ENCODE measurements at regions of chr2 and their contacts with region 1.

Region 1: DNA sequence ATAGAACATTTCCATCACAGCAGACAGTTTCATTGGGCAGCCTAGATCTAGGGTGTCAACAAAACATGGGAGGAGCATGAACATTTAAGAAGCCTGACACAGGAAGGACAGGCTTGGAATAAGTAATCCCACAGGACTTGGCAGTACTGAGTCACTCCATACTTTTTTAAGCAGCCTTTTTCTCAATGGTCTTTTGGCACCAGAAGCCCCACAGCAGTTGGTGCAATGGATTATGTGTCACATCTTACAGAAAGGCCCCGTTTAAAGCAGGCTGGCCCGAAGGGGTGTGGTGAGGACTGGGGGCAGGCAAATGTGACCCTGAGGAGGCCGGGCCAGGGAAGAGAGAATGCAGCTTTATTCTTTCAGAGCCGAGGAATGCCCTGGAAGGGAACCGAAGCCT is 26.6 kb downstream of the SPTBN1 start:
- DNase-seq: no peak
- ATAC-seq: no peak
- H3K4me3 ChIP-seq: no peak overlapping the region
- H3K4me3 Mint-ChIP-seq: no peak overlapping the region
- H3K27ac ChIP-seq: no peak overlapping the region
- H3K27ac Mint-ChIP-seq: no peak overlapping the region
- H3K4me1 ChIP-seq: no peaks in the 10 kb centered on the region
- H3K4me1 Mint-ChIP-seq: no peaks in the 10 kb centered on the region
- H3K27me3 ChIP-seq: no peaks in the 10 kb centered on the region
- H3K27me3 Mint-ChIP-seq: no peaks in the 10 kb centered on the region
- CTCF ChIP-seq: no peak

Region 2: DNA sequence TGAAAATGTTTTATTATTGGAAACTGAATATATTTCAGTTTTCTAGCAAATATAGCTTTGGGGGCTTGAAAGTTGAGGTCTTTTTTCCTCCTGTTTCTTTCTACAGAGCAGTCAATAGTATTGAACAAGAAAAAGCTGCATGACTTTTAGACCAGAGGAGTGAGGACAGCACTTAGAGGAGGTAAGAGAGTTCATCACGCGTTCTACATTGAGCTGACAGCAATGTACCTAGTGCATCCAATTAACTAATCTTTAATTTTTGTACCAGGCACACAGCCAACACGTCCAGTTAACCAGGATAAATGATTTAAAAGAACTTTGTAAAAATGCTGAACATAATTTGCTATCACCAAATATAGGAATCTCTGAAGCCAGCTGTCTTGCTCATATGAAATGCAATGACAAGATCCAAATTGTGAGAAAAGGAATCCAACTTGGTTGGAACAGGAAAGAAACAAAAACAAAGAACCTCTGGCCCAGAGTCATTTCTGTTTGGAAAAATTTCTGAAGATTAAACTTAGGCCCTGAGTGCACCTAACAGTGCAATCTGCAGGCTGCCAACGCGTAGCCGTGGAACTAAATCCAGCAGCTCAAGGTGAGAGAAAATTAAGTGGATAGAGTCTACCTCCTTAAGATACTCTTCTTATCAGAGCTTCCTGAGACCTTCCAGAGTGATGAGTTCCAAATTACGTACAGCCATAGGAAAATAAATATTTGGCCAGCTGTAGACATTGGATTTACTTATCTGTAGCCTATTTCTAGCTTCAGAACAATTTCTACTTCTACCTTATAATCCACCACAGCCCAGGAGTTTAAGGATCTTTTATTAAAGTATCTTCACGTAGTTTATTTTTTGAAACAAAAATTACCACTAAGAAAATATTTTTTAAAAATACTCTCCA is 47.1 kb before region 1 on chr2:
- CTCF ChIA-PET with region 1: no interaction called
- POLR2A ChIA-PET with region 1: no interaction called
- intact Hi-C with region 1: loop called in 1 of 2 experiments (anchors 2 kb)
- DNase-seq: no peak
- ATAC-seq: no peak
- H3K4me3 ChIP-seq: no peak overlapping the region
- H3K4me3 Mint-ChIP-seq: no peak overlapping the region
- H3K27ac ChIP-seq: no peak overlapping the region
- H3K27ac Mint-ChIP-seq: no peak overlapping the region
- H3K4me1 ChIP-seq: no peaks in the 10 kb centered on the region
- H3K4me1 Mint-ChIP-seq: no peaks in the 10 kb centered on the region
- H3K27me3 ChIP-seq: peaks cover 0 to 4% of the 10 kb centered on the region in 2 experiments
- H3K27me3 Mint-ChIP-seq: no peaks in the 10 kb centered on the region
- CTCF ChIP-seq: no peak

Region 3: GRCh38 chr2:54459037-54459441 is 23.7 kb before region 1 on chr2:
- CTCF ChIA-PET with region 1: no interaction called
- POLR2A ChIA-PET with region 1: no interaction called
- intact Hi-C with region 1: no loop called
- DNase-seq: no peak
- ATAC-seq: no peak
- H3K4me3 ChIP-seq: no peak overlapping the region
- H3K4me3 Mint-ChIP-seq: no peak overlapping the region
- H3K27ac ChIP-seq: no peak overlapping the region
- H3K27ac Mint-ChIP-seq: no peak overlapping the region
- H3K4me1 ChIP-seq: peaks cover 17% of the 10 kb centered on the region
- H3K4me1 Mint-ChIP-seq: peaks cover 22% of the 10 kb centered on the region
- H3K27me3 ChIP-seq: peaks cover 40 to 77% of the 10 kb centered on the region in 2 experiments
- H3K27me3 Mint-ChIP-seq: peaks cover 74% of the 10 kb centered on the region
- CTCF ChIP-seq: no peak

Region 4: DNA sequence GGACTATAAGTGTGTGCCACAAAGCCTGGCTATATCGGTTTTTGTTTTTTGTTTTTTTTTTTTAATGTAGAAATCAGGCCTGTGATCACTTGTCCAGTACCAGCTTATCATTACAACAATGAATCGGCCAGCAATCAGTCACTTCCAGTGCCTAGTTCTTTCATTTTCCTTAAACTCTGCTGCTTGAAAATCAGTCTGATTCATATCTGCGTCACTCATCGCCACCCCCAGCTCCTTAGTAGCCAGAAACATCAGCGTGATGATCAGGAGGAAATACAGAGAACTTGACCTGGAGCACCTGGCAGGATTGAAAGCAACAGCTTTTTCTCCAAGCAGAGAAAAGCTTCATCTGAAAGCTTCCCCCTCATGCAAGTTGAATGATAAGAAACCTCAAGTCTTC is 48.8 kb after region 1 on chr2:
- CTCF ChIA-PET with region 1: no interaction called
- POLR2A ChIA-PET with region 1: no interaction called
- intact Hi-C with region 1: no loop called
- DNase-seq: no peak
- ATAC-seq: no peak
- H3K4me3 ChIP-seq: no peak overlapping the region
- H3K4me3 Mint-ChIP-seq: no peak overlapping the region
- H3K27ac ChIP-seq: no peak overlapping the region
- H3K27ac Mint-ChIP-seq: no peak overlapping the region
- H3K4me1 ChIP-seq: no peaks in the 10 kb centered on the region
- H3K4me1 Mint-ChIP-seq: peaks cover 18% of the 10 kb centered on the region
- H3K27me3 ChIP-seq: no peaks in the 10 kb centered on the region
- H3K27me3 Mint-ChIP-seq: no peaks in the 10 kb centered on the region
- CTCF ChIP-seq: no peak